Colonic mucosa (tissue), 4 donors: ENCODE measurements at regions of chr12 and their contacts with region 1.

Region 1: DNA sequence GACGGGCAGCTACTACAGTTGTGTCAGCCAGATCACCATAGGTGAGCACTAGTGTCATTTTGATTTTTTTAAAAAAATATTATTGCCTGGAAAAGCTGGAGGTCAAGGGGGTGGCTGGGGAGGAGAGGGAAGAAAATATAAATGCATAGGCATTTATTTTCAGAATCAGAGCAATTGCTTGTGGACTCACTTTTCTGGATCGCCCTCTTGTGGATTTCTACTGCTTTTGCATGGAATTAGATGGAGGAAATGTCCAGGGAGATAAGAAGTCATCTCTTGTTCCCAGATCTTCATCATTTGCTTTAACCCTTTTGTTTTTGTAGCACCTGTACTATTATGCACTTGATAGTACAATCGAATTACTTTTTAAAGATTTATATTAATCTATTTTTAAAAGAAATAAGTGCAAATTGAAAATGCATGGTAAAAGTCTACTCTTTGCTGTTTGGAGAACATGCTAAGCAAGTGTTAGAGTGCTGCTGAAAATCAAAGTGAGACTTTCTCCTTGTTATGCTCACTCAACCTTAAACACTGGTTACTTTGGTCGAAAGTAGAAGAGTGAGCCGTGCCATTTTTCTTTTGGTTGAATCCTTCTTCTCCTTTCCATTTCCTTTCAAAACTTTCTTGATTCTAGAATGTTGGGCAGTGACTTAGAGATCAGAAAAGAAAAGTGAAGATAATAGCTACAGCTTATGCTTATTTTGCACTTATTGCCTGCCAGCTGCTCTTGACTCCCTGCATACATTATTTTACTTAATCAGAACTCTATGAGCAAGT is 60.6 kb upstream of the ANO4 start:
- DNase-seq: no peak
- H3K4me3 ChIP-seq: no peak overlapping the region
- H3K27ac ChIP-seq: no peak overlapping the region
- H3K4me1 ChIP-seq: no peaks in the 10 kb centered on the region
- H3K27me3 ChIP-seq: no peaks in the 10 kb centered on the region
- CTCF ChIP-seq: peak; percentile 43

Region 2: GRCh38 chr12:100234598-100235304 is 499.3 kb before region 1 on chr12:
- intact Hi-C with region 1: loop called (anchors 10 kb)
- DNase-seq: no peak
- H3K4me3 ChIP-seq: no peak overlapping the region
- H3K27ac ChIP-seq: no peak overlapping the region
- H3K4me1 ChIP-seq: no peaks in the 10 kb centered on the region
- H3K27me3 ChIP-seq: no peaks in the 10 kb centered on the region
- CTCF ChIP-seq: peak; percentile 74

Region 3: DNA sequence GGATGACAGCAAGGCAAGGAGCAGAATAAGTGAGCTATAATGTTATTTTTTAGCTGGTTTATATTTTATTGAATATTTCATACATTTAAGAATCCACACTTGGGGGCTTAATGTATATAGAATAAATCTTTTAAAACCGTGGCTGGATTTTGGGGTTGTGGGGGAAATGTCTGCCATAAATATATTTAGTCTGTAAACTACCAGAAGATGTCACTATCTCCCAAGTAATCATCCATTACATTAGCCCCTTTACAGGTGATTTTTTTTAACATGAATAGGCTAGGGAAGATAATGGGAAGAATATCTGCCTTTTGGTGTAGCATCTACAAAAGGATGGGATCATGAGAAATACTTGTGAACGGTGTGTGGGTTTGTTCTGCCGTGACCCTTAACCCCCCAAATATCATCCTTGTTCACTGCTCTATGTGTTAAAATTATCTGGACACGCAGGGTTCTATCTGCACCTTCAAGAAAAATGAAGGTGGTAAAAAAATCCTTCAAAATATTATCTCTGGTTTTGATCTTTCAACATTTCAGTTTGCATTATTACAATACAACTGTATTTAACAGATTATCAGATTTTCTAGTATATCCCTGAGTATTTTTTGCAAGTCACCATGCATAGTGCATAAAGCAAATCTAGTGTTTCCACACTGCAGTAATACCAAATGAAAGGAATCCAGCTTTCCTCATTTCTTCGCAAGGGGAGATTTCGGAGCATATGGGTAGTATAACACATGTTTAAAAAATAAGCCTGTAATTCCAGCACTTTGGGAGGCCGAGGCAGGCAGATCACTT is 385.1 kb before region 1 on chr12:
- intact Hi-C with region 1: loop called (anchors 5 kb)
- DNase-seq: no peak
- H3K4me3 ChIP-seq: no peak overlapping the region
- H3K27ac ChIP-seq: no peak overlapping the region
- H3K4me1 ChIP-seq: no peaks in the 10 kb centered on the region
- H3K27me3 ChIP-seq: no peaks in the 10 kb centered on the region
- CTCF ChIP-seq: peak; percentile 17

Region 4: GRCh38 chr12:100554608-100555077 is 179.4 kb before region 1 on chr12:
- intact Hi-C with region 1: loop called (anchors 10 kb)
- DNase-seq: peak; percentile 44
- H3K4me3 ChIP-seq: no peak overlapping the region
- H3K27ac ChIP-seq: no peak overlapping the region
- H3K4me1 ChIP-seq: no peaks in the 10 kb centered on the region
- H3K27me3 ChIP-seq: no peaks in the 10 kb centered on the region
- CTCF ChIP-seq: peak; percentile 86

Region 5: DNA sequence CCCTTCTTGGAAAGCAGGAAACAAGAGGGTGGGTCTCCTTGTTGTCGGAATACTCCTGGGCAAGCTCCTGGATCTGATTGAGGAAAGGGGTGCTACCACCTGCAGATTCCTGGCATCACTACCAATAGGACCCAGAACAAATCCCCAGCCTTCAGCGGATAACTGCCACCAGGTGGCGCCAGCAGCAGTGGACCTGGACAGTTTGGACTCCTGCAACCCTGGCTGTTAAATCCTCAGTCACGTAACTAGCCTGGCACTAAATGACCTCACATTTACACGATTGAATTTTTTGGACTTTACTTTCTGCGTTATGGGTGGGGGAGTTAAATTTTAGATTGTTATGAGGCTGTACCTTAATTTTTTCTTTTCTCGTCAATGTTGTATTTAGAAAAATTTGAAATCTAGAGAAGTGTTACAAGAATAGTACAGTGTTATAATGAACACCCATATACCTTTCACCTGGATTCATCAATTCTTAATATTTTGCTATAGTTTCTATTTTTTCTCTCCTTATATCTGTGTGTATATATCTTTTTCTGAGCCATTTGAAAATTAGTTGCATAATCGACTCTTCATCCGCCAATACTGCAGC is 65.0 kb before region 1 on chr12:
- intact Hi-C with region 1: loop called (anchors 5 kb)
- DNase-seq: peak; percentile 82
- H3K4me3 ChIP-seq: no peak overlapping the region
- H3K27ac ChIP-seq: no peak overlapping the region
- H3K4me1 ChIP-seq: no peaks in the 10 kb centered on the region
- H3K27me3 ChIP-seq: no peaks in the 10 kb centered on the region
- CTCF ChIP-seq: peak; percentile 69

Region 6: GRCh38 chr12:100858656-100859055 is 124.7 kb after region 1 on chr12:
- intact Hi-C with region 1: no loop called
- DNase-seq: no peak
- H3K4me3 ChIP-seq: no peak overlapping the region
- H3K27ac ChIP-seq: no peak overlapping the region
- H3K4me1 ChIP-seq: no peaks in the 10 kb centered on the region
- H3K27me3 ChIP-seq: no peaks in the 10 kb centered on the region
- CTCF ChIP-seq: no peak

Region 7: DNA sequence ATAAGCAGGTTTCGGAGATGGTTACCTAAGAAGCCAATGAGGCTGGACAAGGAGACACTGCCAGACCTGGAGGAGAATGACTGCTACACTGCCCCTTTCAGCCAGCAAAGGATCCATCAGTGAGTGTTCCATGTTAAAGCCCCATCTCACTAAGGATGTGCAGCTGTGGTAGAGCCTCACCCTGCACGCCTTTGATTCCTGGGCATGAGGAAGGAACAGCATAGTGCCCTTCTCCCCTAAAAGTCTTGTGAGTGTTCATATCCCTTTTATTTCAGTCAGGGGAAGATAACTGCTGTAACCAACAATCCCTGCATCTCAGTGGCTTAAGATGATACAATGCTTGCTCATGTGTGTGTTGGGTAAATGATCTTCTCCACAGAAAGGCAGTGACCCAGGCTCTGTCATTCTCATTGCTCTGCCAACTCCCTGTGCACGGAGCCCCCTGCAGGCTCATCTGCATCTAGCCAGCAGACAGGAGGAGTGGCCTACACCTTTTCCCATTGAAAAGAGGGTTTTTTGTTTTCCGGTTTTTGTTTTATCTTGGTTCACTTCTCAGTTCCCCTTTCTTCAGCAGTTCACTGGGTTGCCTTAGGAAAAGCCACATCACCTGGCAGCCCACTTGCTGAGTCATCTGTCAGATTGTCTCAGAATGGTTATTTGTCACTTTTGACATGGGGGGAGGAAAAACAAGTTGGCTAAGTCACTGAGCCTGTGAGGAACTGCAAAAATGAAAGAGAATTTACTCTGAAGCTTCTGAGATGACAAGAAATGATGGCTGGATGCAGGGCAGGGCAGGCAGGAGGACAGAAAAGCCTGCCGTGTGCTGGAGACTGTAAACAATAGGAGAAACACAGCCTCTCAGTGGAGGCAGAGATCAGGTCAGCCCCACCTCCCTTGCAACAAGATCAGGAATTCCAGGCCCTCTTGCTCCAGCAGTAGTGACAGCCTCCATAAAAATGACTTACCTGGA is 253.8 kb after region 1 on chr12:
- intact Hi-C with region 1: no loop called
- DNase-seq: no peak
- H3K4me3 ChIP-seq: no peak overlapping the region
- H3K27ac ChIP-seq: no peak overlapping the region
- H3K4me1 ChIP-seq: no peaks in the 10 kb centered on the region
- H3K27me3 ChIP-seq: no peaks in the 10 kb centered on the region
- CTCF ChIP-seq: peak; percentile 15